MCF 10A (cell line): ENCODE measurements at regions of chr6 and their contacts with region 1.

Region 1: GRCh38 chr6:128478230-128479045 is 42.0 kb downstream of the PTPRK start:
- DNase-seq: no peak
- H3K4me3 Mint-ChIP-seq: no peak overlapping the region
- H3K27ac Mint-ChIP-seq: no peak overlapping the region
- H3K4me1 Mint-ChIP-seq: peaks cover 15% of the 10 kb centered on the region
- H3K27me3 Mint-ChIP-seq: no peaks in the 10 kb centered on the region
- CTCF ChIP-seq: no peak

Region 2: DNA sequence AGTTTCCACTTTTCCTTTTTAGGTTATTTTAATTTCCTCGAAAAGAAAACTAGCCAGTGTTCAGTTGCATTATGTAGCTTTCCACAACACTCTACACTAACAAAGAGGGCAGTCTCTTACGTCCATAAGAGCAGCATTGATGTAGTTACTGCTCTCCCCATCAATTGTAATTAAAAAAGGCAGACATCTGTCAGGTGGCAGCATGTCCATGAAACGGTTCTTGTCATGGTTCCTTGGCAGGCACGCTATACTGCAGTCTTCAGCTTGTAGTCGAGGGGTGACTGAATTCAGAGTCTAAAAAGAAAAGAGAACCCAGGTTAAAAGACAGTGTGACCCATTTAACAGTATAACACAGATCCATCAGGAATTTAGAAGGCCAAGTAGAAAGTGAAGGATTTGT is 497.4 kb before region 1 on chr6:
- CTCF ChIA-PET with region 1: no interaction called
- POLR2A ChIA-PET with region 1: no interaction called
- intact Hi-C with region 1: no loop called
- DNase-seq: no peak
- H3K4me3 Mint-ChIP-seq: no peak overlapping the region
- H3K27ac Mint-ChIP-seq: no peak overlapping the region
- H3K4me1 Mint-ChIP-seq: no peaks in the 10 kb centered on the region
- H3K27me3 Mint-ChIP-seq: no peaks in the 10 kb centered on the region
- CTCF ChIP-seq: no peak

Region 3: DNA sequence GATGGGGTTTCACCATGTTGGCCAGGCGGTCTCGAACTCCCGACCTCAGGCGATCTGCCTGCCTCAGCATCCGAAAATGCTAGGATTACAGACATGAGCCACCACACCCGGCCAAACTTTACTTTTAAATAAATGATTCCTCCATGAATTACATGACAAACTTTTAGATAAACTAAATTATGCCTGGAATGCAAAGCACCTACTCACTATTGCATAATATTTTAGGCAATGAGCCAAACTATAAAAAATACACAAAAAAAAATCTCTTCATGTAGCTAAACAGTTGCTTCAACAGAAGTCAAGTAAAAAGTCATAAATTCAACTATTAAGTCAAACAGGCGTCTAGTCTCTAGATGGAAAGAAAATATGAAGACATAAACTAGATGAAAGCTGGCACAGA is 14.5 kb before region 1 on chr6:
- CTCF ChIA-PET with region 1: interaction called, 4 read pairs
- POLR2A ChIA-PET with region 1: interaction called, 10 read pairs
- intact Hi-C with region 1: no loop called
- DNase-seq: peak; percentile 33
- H3K4me3 Mint-ChIP-seq: peak overlapping the region; percentile 6
- H3K27ac Mint-ChIP-seq: peak overlapping the region; percentile 77
- H3K4me1 Mint-ChIP-seq: peaks cover 23% of the 10 kb centered on the region
- H3K27me3 Mint-ChIP-seq: no peaks in the 10 kb centered on the region
- CTCF ChIP-seq: no peak

Region 4: GRCh38 chr6:128696663-128697391 is 218.4 kb after region 1 on chr6:
- CTCF ChIA-PET with region 1: no interaction called
- POLR2A ChIA-PET with region 1: no interaction called
- intact Hi-C with region 1: no loop called
- DNase-seq: peak; percentile 58
- H3K4me3 Mint-ChIP-seq: no peak overlapping the region
- H3K27ac Mint-ChIP-seq: no peak overlapping the region
- H3K4me1 Mint-ChIP-seq: peaks cover 12% of the 10 kb centered on the region
- H3K27me3 Mint-ChIP-seq: no peaks in the 10 kb centered on the region
- CTCF ChIP-seq: no peak

Region 5: DNA sequence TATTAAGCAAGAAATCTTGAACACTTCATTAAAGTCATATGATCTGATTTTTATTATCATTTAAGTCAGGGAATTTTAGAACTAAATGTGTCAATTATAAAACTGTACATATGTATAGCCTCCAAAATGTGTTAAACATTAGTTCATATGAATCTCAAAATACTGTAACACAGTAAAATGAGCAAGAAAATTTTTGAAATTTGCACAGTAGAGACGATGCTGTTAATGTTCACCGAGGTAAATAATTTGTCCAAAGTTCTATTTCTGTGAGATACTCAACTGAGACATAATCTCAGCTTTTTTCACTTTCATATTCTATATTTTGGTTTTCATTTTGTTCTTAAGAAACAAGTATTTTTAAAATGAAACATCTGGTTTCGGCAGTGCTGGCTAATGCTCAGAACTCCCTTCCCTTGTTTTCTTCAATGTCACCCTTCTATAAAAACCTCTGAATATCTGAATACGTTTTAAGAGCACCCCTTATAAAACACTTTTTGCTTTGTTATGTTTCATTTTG is 757.6 kb after region 1 on chr6:
- CTCF ChIA-PET with region 1: no interaction called
- POLR2A ChIA-PET with region 1: no interaction called
- intact Hi-C with region 1: no loop called
- DNase-seq: no peak
- H3K4me3 Mint-ChIP-seq: no peak overlapping the region
- H3K27ac Mint-ChIP-seq: no peak overlapping the region
- H3K4me1 Mint-ChIP-seq: peaks cover 5% of the 10 kb centered on the region
- H3K27me3 Mint-ChIP-seq: peaks cover 21% of the 10 kb centered on the region
- CTCF ChIP-seq: no peak